ENCODE measurements at regions of chr2 and their contacts with region 1.

Region 1: GRCh38 chr2:232315049-232315922 is 63.3 kb upstream of the ALPP start:
- DNase-seq: peak; percentile 73
- ATAC-seq: peak; percentile 91
- H3K4me3 Mint-ChIP-seq: peak overlapping the region; percentile 80
- H3K27ac Mint-ChIP-seq: peak overlapping the region; percentile 99
- H3K4me1 Mint-ChIP-seq: peaks cover 74% of the 10 kb centered on the region
- H3K27me3 Mint-ChIP-seq: no peaks in the 10 kb centered on the region

Region 2: DNA sequence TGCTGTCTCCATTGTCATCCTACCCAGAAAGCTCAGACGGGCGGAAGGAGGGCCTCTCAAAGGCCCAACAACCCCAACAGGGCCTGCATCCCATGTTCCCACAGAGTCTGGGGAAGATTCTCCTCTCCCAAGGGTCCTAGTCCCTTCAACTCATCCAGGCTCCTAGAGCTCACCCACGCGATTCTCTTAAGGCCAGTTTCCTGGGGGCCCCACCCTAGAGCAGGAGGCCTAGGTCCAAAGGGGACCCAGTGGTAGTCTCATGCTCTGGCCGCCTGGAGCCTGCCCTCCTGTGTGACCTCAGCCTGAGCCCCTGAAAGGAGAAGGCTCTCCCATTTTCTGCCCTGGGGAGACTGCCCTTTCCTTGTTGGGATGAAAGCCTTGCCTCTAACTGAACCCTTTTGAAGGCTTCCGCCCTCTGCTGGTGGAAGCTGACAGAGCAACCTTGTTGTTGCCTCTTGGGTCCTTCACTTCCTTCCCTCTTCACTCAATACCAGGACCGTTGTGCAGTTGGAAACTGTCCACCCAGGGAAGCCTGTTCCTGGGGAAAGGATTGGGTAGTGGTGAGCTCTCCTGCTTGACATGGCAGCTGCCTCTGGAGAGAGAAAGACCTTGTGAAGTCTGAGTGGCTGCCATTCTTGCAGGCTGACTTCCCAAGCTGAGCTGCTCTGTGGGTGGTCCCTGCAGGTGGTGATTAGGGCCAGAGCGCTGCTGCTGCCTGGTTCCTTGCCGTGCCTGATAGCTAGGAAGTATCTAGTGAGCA is 22.7 kb before region 1 on chr2:
- POLR2A ChIA-PET with region 1: interaction called, 20 read pairs
- DNase-seq: peak; percentile 72
- ATAC-seq: peak; percentile 82
- H3K4me3 Mint-ChIP-seq: no peak overlapping the region
- H3K27ac Mint-ChIP-seq: peak overlapping the region; percentile 57
- H3K4me1 Mint-ChIP-seq: peaks cover 11% of the 10 kb centered on the region
- H3K27me3 Mint-ChIP-seq: no peaks in the 10 kb centered on the region

Region 3: DNA sequence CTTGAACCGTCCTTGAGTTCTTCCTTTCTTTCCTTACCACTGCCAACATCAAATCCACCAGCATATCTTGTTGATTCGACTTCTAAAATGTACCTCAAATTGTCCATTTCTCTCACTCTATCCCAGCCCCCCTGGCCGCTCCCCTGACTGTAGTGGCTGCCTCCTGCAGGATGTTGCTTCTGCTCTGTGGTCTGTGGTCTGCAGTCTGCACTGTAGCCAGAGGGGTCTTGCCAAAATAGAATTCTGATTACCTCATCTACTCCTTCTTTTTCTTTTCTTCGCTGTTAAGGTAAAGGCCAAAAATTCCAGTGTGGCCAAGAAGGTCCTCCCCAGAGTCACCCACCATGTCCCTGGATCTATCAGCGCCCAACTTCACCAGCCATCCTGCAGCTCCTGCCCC is 16.2 kb before region 1 on chr2:
- POLR2A ChIA-PET with region 1: interaction called, 24 read pairs
- DNase-seq: no peak
- ATAC-seq: peak; percentile 74
- H3K4me3 Mint-ChIP-seq: peak overlapping the region; percentile 68
- H3K27ac Mint-ChIP-seq: peak overlapping the region; percentile 65
- H3K4me1 Mint-ChIP-seq: peaks cover 28% of the 10 kb centered on the region
- H3K27me3 Mint-ChIP-seq: no peaks in the 10 kb centered on the region